Activated CD8-positive, alpha-beta memory T cell treated with anti-CD3 and anti-CD28 coated beads, Interleukin-2, amount 10 ng/mL, durations not matched to agents 7 days and 5 days (primary cell): ENCODE measurements at regions of chr2 and their contacts with region 1.

Region 1: DNA sequence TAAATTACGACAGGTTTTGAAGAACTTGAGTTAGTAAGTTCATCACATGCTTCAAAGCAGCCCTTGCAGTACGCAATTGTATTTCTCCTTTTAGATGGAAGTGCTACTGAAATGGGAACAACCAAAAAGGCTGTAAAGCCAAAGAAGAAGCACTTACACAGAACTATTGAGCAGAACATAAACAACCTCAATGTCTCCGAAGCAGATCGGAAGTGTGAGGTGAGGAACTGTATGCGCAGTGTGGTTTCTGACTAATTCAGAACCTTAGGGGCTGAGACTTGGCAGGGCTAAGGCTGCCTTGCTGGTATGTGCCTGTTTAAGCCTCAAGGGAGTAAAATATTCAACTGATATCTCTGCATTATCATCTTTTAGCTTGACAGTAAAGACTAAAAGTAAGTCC is 8.4 kb downstream of the NCAPH start:
- DNase-seq: peak; percentile 89
- ATAC-seq: peak; percentile 90
- H3K4me3 Mint-ChIP-seq: peak overlapping the region; percentile 47
- H3K27ac Mint-ChIP-seq: peak overlapping the region; percentile 92
- H3K4me1 Mint-ChIP-seq: peaks cover 74% of the 10 kb centered on the region
- H3K27me3 Mint-ChIP-seq: no peaks in the 10 kb centered on the region

Region 2: DNA sequence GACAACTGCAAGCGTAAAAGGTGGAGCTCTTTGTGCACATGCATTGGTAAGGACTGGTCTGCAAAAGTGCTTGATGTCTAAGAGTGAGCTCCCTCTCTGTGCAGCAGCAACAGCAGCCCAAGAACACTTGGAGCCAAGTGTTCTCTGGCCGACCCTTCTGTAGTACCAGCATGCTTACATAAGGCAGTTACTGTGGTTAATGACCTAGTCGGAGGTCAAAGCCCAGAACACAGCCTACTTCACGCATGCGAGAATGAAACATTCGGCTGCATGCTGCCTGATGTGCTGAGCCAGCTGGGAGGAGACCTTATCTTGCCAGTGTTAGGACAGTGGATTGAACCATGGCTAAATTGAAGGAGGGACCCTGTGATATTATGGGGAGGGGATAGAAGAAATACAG is 12.9 kb after region 1 on chr2:
- CTCF ChIA-PET with region 1: interaction called, 13 read pairs
- DNase-seq: no peak
- ATAC-seq: no peak
- H3K4me3 Mint-ChIP-seq: no peak overlapping the region
- H3K27ac Mint-ChIP-seq: no peak overlapping the region
- H3K4me1 Mint-ChIP-seq: peaks cover 20% of the 10 kb centered on the region
- H3K27me3 Mint-ChIP-seq: no peaks in the 10 kb centered on the region

Region 3: GRCh38 chr2:96408616-96409542 is 64.9 kb after region 1 on chr2:
- CTCF ChIA-PET with region 1: no interaction called
- DNase-seq: no peak
- ATAC-seq: no peak
- H3K4me3 Mint-ChIP-seq: no peak overlapping the region
- H3K27ac Mint-ChIP-seq: no peak overlapping the region
- H3K4me1 Mint-ChIP-seq: peaks cover 24% of the 10 kb centered on the region
- H3K27me3 Mint-ChIP-seq: no peaks in the 10 kb centered on the region